Sigmoid colon (tissue), 7 donors: ENCODE measurements at regions of chr13 and their contacts with region 1.

Region 1: GRCh38 chr13:110715395-110716235 is 2.1 kb downstream of the ING1 start:
- DNase-seq: peak; percentile 100
- H3K4me3 ChIP-seq: peak overlapping the region; percentile 91 to 97 (median 94)
- H3K27ac ChIP-seq: peak overlapping the region; percentile 96 to 100 (median 100)
- H3K4me1 ChIP-seq: peaks cover 0 to 39% (median 31%) of the 10 kb centered on the region in 4 donors
- H3K27me3 ChIP-seq: no peaks in the 10 kb centered on the region
- CTCF ChIP-seq: peak in 2 of 4 experiments; percentile 14 to 23
- EP300 ChIP-seq: peak in 2 of 4 donors; percentile 45 to 50
- POLR2A ChIP-seq: peak; percentile 91 to 95

Region 2: DNA sequence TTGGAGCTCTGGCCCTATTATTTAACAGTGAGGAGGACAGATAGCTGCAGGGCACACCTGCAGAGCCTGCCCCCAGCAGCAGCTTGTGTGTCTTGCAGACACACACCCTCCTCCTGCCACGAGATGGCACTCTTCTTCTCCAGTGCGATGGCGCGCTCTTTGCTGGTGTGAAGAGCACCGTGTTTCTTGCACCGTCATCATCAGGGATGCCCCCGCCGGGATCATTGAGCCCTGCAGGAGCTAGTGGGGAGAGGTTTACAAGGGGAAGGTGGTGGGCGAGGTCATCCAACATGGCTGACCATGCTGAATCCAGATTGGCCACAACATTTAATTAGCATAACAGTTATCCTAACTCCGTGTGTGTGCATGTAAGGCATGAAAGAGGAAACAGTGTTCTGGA is 259.7 kb before region 1 on chr13:
- intact Hi-C with region 1: loop called (anchors 10 kb)
- DNase-seq: peak; percentile 92
- H3K4me3 ChIP-seq: no peak overlapping the region
- H3K27ac ChIP-seq: peak overlapping the region in 3 of 4 donors; percentile 71 to 98 (median 82)
- H3K4me1 ChIP-seq: peaks cover 0 to 38% (median 36%) of the 10 kb centered on the region in 4 donors
- H3K27me3 ChIP-seq: no peaks in the 10 kb centered on the region
- CTCF ChIP-seq: peak; percentile 76 to 85 (median 78)
- EP300 ChIP-seq: no peak
- POLR2A ChIP-seq: no peak

Region 3: GRCh38 chr13:110680851-110681250 is 34.8 kb before region 1 on chr13:
- intact Hi-C with region 1: loop called (anchors 2 kb)
- DNase-seq: no peak
- H3K4me3 ChIP-seq: no peak overlapping the region
- H3K27ac ChIP-seq: peak overlapping the region in 2 of 4 donors; percentile 23 to 94
- H3K4me1 ChIP-seq: peaks cover 0 to 21% (median 19%) of the 10 kb centered on the region in 4 donors
- H3K27me3 ChIP-seq: no peaks in the 10 kb centered on the region
- CTCF ChIP-seq: peak in 3 of 4 experiments; percentile 11 to 39 (median 22)
- EP300 ChIP-seq: no peak
- POLR2A ChIP-seq: no peak

Region 4: DNA sequence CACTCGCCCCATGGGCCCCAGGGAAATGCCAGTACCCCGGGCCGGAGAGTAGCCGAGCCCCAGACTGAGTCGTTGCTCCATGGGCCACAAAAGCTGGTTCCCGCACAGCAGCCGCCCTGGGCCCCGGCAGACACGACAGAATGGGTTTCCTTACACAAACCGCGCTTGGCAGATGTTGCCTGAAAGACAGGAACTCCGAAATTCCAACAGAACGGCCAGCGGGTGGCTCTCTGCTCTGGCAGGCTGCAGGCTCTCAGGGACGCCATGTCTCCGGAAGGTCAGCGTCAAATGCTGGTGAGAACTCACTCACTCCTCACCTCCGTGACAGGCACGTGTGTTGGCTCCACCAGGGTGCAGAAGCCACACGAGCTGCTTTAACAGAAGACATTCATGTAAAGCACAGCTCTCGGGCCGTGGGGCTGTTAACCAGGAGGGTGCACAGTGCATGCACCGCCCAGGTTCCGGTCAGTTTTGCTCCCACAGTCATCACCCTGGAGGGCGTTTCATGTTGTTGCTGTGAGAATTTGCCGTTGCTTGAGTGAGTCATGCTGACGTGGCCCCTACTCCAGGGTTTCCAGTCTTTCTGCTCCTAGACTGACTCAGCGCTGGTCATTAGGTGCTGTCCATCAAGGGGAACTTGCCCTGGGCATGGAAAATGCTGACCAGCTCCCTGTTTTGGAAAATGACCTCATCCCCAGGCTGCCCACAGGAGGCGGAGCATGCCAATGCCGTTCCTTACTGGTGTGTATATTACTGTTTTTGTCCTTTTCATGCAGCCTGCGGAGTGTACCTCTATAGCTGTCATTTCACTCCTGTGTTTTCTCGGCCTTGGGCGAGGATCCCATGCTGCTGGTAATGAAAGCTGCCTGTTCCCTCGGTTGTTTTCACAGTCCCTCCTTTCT is 154.4 kb after region 1 on chr13:
- intact Hi-C with region 1: loop called (anchors 2 kb)
- DNase-seq: peak; percentile 96
- H3K4me3 ChIP-seq: peak overlapping the region in 3 of 4 donors; percentile 25 to 36 (median 34)
- H3K27ac ChIP-seq: peak overlapping the region; percentile 75 to 88 (median 82)
- H3K4me1 ChIP-seq: peaks cover 0 to 36% (median 28%) of the 10 kb centered on the region in 4 donors
- H3K27me3 ChIP-seq: no peaks in the 10 kb centered on the region
- CTCF ChIP-seq: peak in 3 of 4 experiments; percentile 26 to 36 (median 27)
- EP300 ChIP-seq: peak in 3 of 4 donors; percentile 28 to 97 (median 72)
- POLR2A ChIP-seq: no peak

Region 5: DNA sequence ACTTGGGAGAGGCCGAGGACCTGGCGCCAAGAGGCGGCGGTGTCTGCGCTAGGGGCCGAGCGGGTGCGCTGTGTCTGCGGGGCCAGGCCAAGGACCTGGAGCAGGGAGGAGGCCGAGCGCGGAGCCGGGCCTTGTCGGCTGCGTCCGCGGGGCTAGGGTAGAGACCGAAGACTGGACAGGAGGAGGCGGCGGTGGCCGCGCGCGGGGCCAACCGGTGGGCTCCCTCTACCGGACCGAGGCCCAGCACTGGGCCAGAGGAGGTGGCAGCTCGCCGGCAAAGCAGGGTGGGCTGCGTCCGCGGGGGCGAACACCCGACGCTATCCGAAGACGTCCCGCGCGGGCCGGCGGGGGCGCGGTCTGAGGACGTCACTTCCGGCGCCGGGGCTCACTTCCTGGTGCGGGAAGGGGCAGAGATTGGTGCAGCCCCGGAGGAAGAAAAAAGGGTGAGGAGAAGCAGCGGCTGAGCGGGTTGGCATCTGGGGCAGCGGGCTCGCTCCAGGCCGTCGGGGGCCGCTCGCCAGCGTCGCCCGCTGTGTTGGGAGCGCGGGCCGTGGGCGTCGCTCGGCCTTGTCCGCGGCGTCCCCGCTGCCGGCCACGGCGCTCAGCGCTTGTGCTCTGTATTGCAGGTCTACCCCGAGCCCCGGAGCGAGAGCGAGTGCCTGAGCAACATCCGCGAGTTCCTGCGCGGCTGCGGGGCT is 437.8 kb after region 1 on chr13:
- intact Hi-C with region 1: loop called (anchors 10 kb)
- DNase-seq: peak; percentile 96
- H3K4me3 ChIP-seq: peak overlapping the region; percentile 76 to 93 (median 87)
- H3K27ac ChIP-seq: peak overlapping the region; percentile 95 to 98 (median 98)
- H3K4me1 ChIP-seq: peaks cover 0 to 43% (median 31%) of the 10 kb centered on the region in 4 donors
- H3K27me3 ChIP-seq: no peaks in the 10 kb centered on the region
- CTCF ChIP-seq: no peak
- EP300 ChIP-seq: peak in 1 of 4 donors; percentile 26
- POLR2A ChIP-seq: peak; percentile 91 to 92